ENCODE measurements at regions of chr16 and their contacts with region 1.

Region 1: GRCh38 chr16:70359552-70359951 is 12.8 kb downstream of the DDX19A start:
- DNase-seq: no peak
- H3K4me3 Mint-ChIP-seq: no peak overlapping the region
- H3K27ac Mint-ChIP-seq: no peak overlapping the region
- H3K4me1 Mint-ChIP-seq: no peaks in the 10 kb centered on the region
- H3K27me3 Mint-ChIP-seq: no peaks in the 10 kb centered on the region
- CTCF ChIP-seq: no peak

Region 2: DNA sequence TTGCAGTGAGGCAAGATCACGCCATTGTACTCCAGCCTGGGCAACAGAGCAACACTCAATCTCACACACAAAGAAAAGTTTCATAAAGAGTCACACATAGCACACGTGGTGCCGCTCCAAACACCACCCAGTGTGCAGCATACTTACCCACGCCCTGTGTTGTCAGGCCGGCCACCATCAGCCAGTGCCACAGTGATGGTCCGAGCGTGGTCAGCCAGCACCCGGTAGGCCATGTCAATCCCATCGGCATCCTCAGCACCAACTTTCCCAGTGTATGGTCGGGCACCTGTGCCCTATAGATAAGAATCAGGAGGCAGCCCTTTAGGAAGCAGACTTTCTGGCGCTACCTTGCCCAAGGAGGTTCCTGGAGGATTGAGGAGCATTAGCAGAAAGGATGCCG is 90.1 kb before region 1 on chr16:
- CTCF ChIA-PET with region 1: no interaction called
- intact Hi-C with region 1: no loop called
- DNase-seq: no peak
- H3K4me3 Mint-ChIP-seq: no peak overlapping the region
- H3K27ac Mint-ChIP-seq: peak overlapping the region; percentile 42
- H3K4me1 Mint-ChIP-seq: no peaks in the 10 kb centered on the region
- H3K27me3 Mint-ChIP-seq: no peaks in the 10 kb centered on the region
- CTCF ChIP-seq: no peak

Region 3: GRCh38 chr16:70331588-70332358 is 27.8 kb before region 1 on chr16:
- CTCF ChIA-PET with region 1: no interaction called
- intact Hi-C with region 1: no loop called
- DNase-seq: peak; percentile 26
- H3K4me3 Mint-ChIP-seq: no peak overlapping the region
- H3K27ac Mint-ChIP-seq: no peak overlapping the region
- H3K4me1 Mint-ChIP-seq: no peaks in the 10 kb centered on the region
- H3K27me3 Mint-ChIP-seq: no peaks in the 10 kb centered on the region
- CTCF ChIP-seq: peak; percentile 67

Region 4: GRCh38 chr16:70399381-70399780 is 39.8 kb after region 1 on chr16:
- CTCF ChIA-PET with region 1: interaction called, 11 read pairs
- intact Hi-C with region 1: no loop called
- DNase-seq: no peak
- H3K4me3 Mint-ChIP-seq: no peak overlapping the region
- H3K27ac Mint-ChIP-seq: no peak overlapping the region
- H3K4me1 Mint-ChIP-seq: peaks cover 8% of the 10 kb centered on the region
- H3K27me3 Mint-ChIP-seq: no peaks in the 10 kb centered on the region
- CTCF ChIP-seq: no peak